ENCODE measurements at regions of chr10 and their contacts with region 1.

Region 1: DNA sequence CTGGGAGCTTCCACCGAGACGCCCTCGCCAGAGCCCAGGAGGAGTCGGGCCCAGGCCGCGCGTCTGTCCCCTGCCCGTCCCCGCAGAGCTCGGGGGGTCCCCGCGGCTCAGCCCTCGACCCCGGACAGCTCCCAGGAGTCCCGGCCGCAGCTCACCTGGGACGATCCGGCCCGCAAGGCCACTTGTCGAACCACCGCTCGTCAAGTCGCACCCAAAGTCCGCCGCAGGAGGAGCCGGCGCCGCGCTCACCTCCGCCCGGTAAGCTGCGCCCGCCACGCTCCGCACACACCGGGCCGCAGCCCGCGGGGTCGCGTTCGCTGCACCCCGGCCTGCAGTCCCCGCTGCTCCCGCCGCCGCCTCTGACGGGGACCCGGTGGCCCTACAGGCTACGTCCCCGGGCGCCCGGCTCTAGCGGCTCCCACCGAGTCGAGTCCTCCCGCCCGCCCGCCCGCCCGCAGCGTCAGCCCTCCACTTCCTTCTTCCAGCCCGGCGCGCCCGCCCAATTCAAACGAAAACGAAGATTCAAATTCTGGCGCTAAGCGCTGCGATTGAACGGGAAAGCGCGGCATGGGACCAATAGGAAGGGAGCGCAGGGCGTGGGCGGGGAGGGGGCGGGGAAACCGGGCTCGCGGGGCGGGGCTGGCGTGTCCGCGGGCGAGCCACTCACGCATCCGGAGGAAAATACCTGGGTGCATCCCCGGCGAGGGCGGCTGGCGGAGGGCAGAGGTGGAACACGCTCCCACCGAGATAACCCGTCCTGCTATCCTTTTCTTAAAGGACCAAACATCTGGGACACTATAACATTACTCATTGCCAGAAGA is at the start of gene MKI67:
- DNase-seq: peak; percentile 97
- H3K4me3 Mint-ChIP-seq: peak within 1 kb of the TSS; percentile 95
- H3K27ac Mint-ChIP-seq: peak within 1 kb of the TSS; percentile 96
- H3K4me1 Mint-ChIP-seq: peaks cover 38% of the 10 kb centered on the region
- H3K27me3 Mint-ChIP-seq: peaks cover 4% of the 10 kb centered on the region
- total RNA-seq, gene MKI67: 161 and 164 TPM in 2 replicates

Region 2: DNA sequence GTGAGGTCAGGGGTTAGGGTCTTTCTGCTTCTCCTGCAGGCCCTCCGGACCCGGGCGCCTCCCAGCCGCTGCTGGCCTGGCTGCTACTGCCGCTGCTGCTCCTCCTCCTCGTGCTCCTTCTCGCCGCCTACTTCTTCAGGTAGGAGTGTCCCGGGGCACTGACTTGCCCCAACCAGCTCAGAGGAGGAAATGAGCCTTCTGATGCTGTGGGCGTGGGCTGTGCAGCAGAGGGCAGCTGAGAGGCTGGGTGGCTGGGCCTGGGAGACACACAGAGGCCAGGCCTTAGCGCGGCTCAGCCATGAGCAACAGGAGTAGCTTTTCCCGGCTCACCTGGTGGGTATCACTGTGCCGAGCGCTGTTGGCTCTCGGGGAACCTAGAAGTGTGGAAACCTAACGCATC is 78.8 kb before region 1 on chr10:
- intact Hi-C with region 1: loop called (anchors 1 kb)
- DNase-seq: peak; percentile 96
- H3K4me3 Mint-ChIP-seq: peak overlapping the region; percentile 86
- H3K27ac Mint-ChIP-seq: peak overlapping the region; percentile 90
- H3K4me1 Mint-ChIP-seq: peaks cover 48% of the 10 kb centered on the region
- H3K27me3 Mint-ChIP-seq: no peaks in the 10 kb centered on the region

Region 3: DNA sequence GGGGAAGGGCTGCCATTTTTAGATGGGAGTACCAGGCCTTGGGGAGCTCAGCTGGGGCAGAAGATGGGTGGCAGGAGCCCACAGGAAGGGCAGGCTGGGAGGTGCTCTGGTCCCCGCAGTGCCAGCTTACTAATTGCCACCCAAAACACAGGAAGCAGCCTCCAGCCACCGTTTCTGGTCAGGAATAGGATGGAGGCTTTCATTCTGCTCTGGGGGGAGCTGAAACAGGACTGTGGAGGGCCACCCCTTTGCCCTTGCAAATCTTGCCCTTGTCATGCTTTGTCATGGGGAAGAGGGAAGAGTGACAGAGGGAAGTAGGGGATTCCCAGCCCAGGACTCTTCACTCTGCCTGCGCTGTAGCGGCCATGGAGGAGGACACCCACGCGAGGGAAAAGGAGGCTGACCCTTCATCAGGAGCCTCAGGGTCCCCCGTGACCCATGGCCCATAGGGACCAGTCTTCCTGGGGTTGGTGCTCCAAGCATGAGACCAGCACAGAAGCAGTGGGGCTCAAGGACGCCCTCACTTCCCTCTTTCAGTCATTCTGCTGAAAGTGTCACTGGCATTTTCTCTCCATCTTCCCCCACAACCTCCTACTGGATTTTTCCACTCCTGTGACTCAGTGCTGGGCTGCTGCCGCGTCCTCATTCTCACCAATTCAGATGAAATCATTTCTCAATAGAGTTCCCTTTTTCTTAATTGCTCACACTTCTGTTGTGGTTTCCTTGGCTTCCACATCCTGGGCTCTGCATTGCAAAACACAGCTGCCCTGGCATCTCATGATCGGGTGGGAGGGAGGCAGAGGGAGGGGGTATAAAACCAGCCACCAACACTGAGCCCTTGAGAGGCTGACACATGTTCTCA is 61.8 kb before region 1 on chr10:
- intact Hi-C with region 1: loop called (anchors 1 kb)
- DNase-seq: peak; percentile 85
- H3K4me3 Mint-ChIP-seq: peak overlapping the region; percentile 77
- H3K27ac Mint-ChIP-seq: peak overlapping the region; percentile 96
- H3K4me1 Mint-ChIP-seq: peaks cover 57% of the 10 kb centered on the region
- H3K27me3 Mint-ChIP-seq: no peaks in the 10 kb centered on the region

Region 4: GRCh38 chr10:128087884-128088709 is 38.1 kb before region 1 on chr10:
- intact Hi-C with region 1: no loop called
- DNase-seq: no peak
- H3K4me3 Mint-ChIP-seq: no peak overlapping the region
- H3K27ac Mint-ChIP-seq: no peak overlapping the region
- H3K4me1 Mint-ChIP-seq: peaks cover 2% of the 10 kb centered on the region
- H3K27me3 Mint-ChIP-seq: no peaks in the 10 kb centered on the region

Region 5: GRCh38 chr10:128180843-128181242 is 54.7 kb after region 1 on chr10:
- intact Hi-C with region 1: loop called (anchors 2 kb)
- DNase-seq: peak; percentile 90
- H3K4me3 Mint-ChIP-seq: peak overlapping the region; percentile 81
- H3K27ac Mint-ChIP-seq: peak overlapping the region; percentile 88
- H3K4me1 Mint-ChIP-seq: peaks cover 45% of the 10 kb centered on the region
- H3K27me3 Mint-ChIP-seq: peaks cover 21% of the 10 kb centered on the region

Measured in activated CD4-positive, alpha-beta T cell treated with anti-CD3 and anti-CD28 coated beads, Interleukin-2, amount 10 ng/mL, durations not matched to agents 24 days and 14 days (primary cell).